Activated naive CD4-positive, alpha-beta T cell treated with anti-CD3 and anti-CD28 coated beads for 36 hours (primary cell): ENCODE measurements at regions of chr4 and their contacts with region 1.

Region 1: DNA sequence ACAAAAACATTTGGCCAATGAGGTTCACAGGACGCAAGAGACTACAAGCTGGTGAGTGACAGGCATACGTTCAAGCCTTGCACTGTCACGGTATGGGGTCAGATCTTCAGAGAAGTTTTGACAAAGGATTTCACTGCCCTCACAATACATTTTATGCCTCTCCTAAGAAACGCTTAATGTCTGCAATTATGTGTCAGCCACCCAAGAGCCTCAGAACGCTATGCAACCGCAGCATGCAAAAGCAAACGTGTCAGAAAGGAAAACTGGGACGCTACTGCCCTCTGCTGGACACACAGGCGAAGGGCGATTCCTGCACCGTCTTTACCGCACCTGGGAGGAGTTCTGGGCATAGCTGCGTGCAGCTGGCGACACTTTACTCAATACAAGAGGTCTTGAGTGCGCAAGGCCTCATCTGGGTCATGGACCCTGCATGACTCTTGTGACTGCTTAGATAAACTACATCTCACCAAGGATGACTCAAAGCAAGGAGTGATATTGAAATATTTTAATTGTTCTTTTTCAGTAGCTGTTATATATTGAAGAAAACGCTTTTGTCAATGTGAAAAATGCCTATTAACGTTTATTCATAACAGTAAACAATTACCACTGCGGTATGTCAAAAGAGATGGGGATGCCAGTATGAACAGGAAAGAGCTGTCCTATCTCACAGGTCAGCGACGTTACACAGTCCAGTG is 147.6 kb upstream of the FRG1 start:
- DNase-seq: peak; percentile 75
- H3K4me3 Mint-ChIP-seq: no peak overlapping the region
- H3K27ac Mint-ChIP-seq: no peak overlapping the region
- H3K4me1 Mint-ChIP-seq: peaks cover 2% of the 10 kb centered on the region
- H3K27me3 Mint-ChIP-seq: peaks cover 9% of the 10 kb centered on the region

Region 2: DNA sequence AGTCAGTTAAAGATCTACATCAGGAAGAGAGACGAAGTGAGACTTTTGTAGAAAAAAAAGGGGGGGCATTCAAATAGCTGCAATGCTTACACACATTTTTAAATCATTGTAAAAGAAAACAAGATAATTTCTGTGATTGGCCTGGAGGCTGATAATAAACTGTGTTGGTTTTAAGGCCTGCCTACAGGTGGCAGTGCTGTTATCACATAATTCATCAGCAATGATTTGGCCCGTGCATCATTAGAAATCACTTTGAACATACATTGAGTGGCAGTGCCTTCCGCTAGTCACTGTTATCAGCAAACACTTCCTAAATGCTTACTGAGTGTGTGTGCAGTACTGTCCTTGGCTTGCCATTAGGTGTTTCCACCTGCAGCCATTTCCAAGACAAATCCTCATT is 821.9 kb before region 1 on chr4:
- CTCF ChIA-PET with region 1: no interaction called
- intact Hi-C with region 1: loop called (anchors 2 kb)
- DNase-seq: no peak
- H3K4me3 Mint-ChIP-seq: no peak overlapping the region
- H3K27ac Mint-ChIP-seq: no peak overlapping the region
- H3K4me1 Mint-ChIP-seq: no peaks in the 10 kb centered on the region
- H3K27me3 Mint-ChIP-seq: no peaks in the 10 kb centered on the region

Region 3: DNA sequence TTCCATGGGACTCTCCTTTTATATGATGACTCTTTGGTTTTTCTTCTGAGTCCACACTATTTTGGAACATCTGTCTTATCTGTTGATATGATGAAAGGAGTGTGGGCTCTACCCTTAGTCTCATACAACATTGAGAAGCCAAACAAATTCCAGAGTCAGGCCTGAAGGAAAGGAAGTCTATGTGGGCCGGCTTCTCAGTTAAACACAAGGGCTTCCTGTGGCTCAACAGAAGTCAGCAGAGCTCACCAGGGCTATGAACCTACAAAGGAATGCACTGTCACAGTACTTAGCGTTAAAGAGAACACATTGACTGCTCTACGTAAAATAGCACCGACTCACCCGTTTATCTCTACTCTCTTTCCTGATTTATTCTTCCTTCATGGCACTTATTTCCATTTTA is 493.4 kb before region 1 on chr4:
- CTCF ChIA-PET with region 1: no interaction called
- intact Hi-C with region 1: loop called (anchors 10 kb)
- DNase-seq: no peak
- H3K4me3 Mint-ChIP-seq: no peak overlapping the region
- H3K27ac Mint-ChIP-seq: no peak overlapping the region
- H3K4me1 Mint-ChIP-seq: no peaks in the 10 kb centered on the region
- H3K27me3 Mint-ChIP-seq: no peaks in the 10 kb centered on the region

Region 4: DNA sequence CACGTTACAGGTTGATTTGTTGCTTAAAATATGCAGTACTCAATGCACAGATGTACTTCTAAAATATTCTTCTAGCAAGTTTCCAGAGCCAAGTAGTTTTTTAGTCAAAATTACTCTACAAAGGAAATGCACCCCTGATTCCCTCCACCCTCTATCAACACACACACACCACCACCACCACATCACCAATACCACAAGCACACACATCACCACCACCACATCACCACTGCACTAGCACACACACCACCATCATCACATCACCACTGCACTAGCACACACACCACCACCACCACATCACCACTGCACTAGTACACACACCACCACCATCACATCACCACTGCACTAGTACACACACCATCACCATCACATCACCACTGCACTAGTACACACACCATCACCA is 42.4 kb after region 1 on chr4:
- CTCF ChIA-PET with region 1: no interaction called
- intact Hi-C with region 1: no loop called
- DNase-seq: no peak
- H3K4me3 Mint-ChIP-seq: no peak overlapping the region
- H3K27ac Mint-ChIP-seq: no peak overlapping the region
- H3K4me1 Mint-ChIP-seq: no peaks in the 10 kb centered on the region
- H3K27me3 Mint-ChIP-seq: no peaks in the 10 kb centered on the region

Region 5: DNA sequence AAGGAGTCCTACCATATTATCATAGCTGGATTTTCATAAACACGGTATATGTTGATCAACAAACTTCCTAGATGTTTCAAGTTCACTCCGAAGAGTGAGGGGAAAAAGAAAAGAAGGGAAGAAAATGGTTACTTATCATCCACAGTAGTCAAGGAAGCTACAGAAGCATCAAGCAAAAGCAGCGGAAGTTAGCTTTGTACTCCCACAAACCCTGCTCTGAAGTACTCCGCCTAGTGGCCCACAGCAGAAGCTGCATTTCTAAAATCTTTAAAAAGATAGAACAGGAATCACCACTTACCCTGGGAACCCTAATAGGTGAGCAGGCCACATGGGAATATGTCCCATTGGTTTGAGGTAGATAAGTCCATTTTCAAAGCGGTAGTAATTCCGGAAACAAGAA is 119.1 kb after region 1 on chr4:
- CTCF ChIA-PET with region 1: interaction called, 4 read pairs
- intact Hi-C with region 1: loop called (anchors 10 kb)
- DNase-seq: no peak
- H3K4me3 Mint-ChIP-seq: no peak overlapping the region
- H3K27ac Mint-ChIP-seq: no peak overlapping the region
- H3K4me1 Mint-ChIP-seq: no peaks in the 10 kb centered on the region
- H3K27me3 Mint-ChIP-seq: peaks cover 12% of the 10 kb centered on the region